ENCODE measurements at regions of chr1 and their contacts with region 1.

Region 1: GRCh38 chr1:229665912-229666558 is 40.0 kb downstream of the URB2 start:
- DNase-seq: no peak
- H3K4me3 ChIP-seq: no peak overlapping the region
- H3K27ac ChIP-seq: no peak overlapping the region
- H3K4me1 ChIP-seq: no peaks in the 10 kb centered on the region
- H3K27me3 ChIP-seq: no peaks in the 10 kb centered on the region
- CTCF ChIP-seq: no peak
- POLR2A ChIP-seq: no peak

Region 2: GRCh38 chr1:230317823-230318819 is 652.1 kb after region 1 on chr1:
- intact Hi-C with region 1: loop called (anchors 5 kb)
- DNase-seq: no peak
- H3K4me3 ChIP-seq: no peak overlapping the region
- H3K27ac ChIP-seq: no peak overlapping the region
- H3K4me1 ChIP-seq: no peaks in the 10 kb centered on the region
- H3K27me3 ChIP-seq: no peaks in the 10 kb centered on the region
- CTCF ChIP-seq: no peak
- POLR2A ChIP-seq: no peak

Measured in uterus (tissue), 4 donors.